ENCODE measurements at regions of chr12 and their contacts with region 1.

Region 1: GRCh38 chr12:124453419-124454351 is 113.7 kb downstream of the NCOR2 start:
- DNase-seq: peak; percentile 74
- H3K4me3 Mint-ChIP-seq: peak overlapping the region; percentile 39
- H3K27ac Mint-ChIP-seq: peak overlapping the region; percentile 55
- H3K4me1 Mint-ChIP-seq: peaks cover 44% of the 10 kb centered on the region
- H3K27me3 Mint-ChIP-seq: peaks cover 2% of the 10 kb centered on the region

Region 2: GRCh38 chr12:124480469-124481256 is 27.0 kb after region 1 on chr12:
- intact Hi-C with region 1: loop called (anchors 1 kb)
- DNase-seq: peak; percentile 62
- H3K4me3 Mint-ChIP-seq: no peak overlapping the region
- H3K27ac Mint-ChIP-seq: peak overlapping the region; percentile 52
- H3K4me1 Mint-ChIP-seq: peaks cover 36% of the 10 kb centered on the region
- H3K27me3 Mint-ChIP-seq: peaks cover 3% of the 10 kb centered on the region

Region 3: GRCh38 chr12:124545508-124546418 is 92.1 kb after region 1 on chr12:
- intact Hi-C with region 1: loop called (anchors 5 kb)
- DNase-seq: peak; percentile 57
- H3K4me3 Mint-ChIP-seq: peak overlapping the region; percentile 26
- H3K27ac Mint-ChIP-seq: peak overlapping the region; percentile 58
- H3K4me1 Mint-ChIP-seq: peaks cover 50% of the 10 kb centered on the region
- H3K27me3 Mint-ChIP-seq: peaks cover 3% of the 10 kb centered on the region

Region 4: DNA sequence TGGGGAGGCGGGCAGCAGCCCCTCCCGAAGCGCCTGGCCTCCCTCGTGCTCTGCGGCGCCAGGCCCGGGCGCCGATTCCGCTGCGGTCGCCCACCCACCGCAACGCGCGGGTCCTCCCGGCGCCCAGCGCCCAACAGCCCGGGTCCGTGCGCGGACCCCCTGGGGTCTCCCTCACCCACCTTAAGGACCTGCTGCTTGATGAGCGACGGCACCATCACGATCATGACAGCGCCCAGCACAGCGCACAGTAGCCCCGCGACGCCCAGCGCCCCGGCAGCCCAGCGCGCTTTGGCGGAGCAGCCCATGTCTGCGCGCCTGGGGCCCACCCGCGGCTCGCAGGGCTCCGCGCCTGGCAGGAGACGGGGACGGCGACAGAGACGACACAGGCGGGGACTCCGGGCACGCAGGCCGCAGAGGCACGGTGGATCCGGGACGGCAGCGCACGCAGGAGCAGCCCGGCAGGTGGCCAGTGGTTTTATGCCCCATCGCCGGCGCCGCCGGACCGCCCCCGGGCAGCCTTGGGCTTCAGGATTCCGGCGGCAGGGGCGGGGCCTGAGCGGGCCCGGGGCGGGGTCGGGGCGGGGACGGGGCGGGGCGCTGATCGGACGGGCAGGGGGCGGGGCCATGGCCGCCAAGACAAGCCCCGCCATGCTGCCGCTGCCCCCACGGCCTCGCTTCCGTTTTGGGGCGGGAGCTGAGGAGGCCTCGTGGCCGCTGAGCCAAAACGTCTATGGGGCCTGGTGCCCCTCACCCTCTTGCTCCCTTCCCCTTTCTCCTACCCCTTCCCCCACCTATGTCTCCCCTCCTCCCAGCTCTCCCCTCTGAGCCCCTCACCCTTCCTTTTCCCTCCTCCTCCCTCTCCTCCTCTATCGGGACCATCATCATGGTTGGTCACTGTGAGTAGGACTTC is 410.0 kb after region 1 on chr12 and contains the start of gene SCARB1:
- intact Hi-C with region 1: loop called (anchors 10 kb)
- DNase-seq: peak; percentile 70
- H3K4me3 Mint-ChIP-seq: peak within 1 kb of the TSS; percentile 85
- H3K27ac Mint-ChIP-seq: peak within 1 kb of the TSS; percentile 90
- H3K4me1 Mint-ChIP-seq: peaks cover 23% of the 10 kb centered on the region
- H3K27me3 Mint-ChIP-seq: peaks cover 2% of the 10 kb centered on the region
- total RNA-seq, gene SCARB1: 17.9 and 18.5 TPM in 2 replicates

Region 5: DNA sequence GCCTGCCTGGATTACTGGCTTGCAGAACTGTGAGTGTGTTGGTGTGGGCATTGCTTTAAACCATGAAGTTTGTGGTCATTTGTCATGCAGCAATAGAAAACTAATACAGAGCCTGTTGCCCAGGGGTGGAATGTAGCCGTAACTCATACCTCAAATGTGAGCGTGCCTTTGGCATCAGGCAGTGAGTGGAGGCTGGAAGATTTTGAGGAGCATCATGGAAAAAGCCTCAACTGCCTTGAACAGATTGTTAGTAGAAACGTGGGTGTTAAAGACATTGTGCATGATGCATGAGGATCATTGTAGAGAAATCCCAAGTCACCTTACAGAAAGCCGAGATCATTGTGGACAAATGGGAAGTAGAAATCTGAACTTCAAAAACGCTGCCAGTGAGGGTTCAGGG is 1192.0 kb after region 1 on chr12:
- intact Hi-C with region 1: no loop called
- DNase-seq: no peak
- H3K4me3 Mint-ChIP-seq: no peak overlapping the region
- H3K27ac Mint-ChIP-seq: no peak overlapping the region
- H3K4me1 Mint-ChIP-seq: no peaks in the 10 kb centered on the region
- H3K27me3 Mint-ChIP-seq: no peaks in the 10 kb centered on the region